Activated B cell treated with CpG ODN at 0.5 μM for 24 hours (primary cell): ENCODE measurements at regions of chr9 and their contacts with region 1.

Region 1: GRCh38 chr9:121156263-121156731 is 45.4 kb downstream of the RAB14 start:
- DNase-seq: no peak
- ATAC-seq: peak; percentile 87
- H3K4me3 Mint-ChIP-seq: peak overlapping the region; percentile 67
- H3K27ac Mint-ChIP-seq: peak overlapping the region; percentile 92
- H3K4me1 Mint-ChIP-seq: peaks cover 67% of the 10 kb centered on the region
- H3K27me3 Mint-ChIP-seq: no peaks in the 10 kb centered on the region
- CTCF ChIP-seq: no peak

Region 2: GRCh38 chr9:120842690-120843499 is 313.4 kb before region 1 on chr9 and contains the start of gene PSMD5:
- CTCF ChIA-PET with region 1: no interaction called
- POLR2A ChIA-PET with region 1: no interaction called
- intact Hi-C with region 1: loop called (anchors 1 kb)
- DNase-seq: peak; percentile 75
- ATAC-seq: peak; percentile 99
- H3K4me3 Mint-ChIP-seq: peak within 1 kb of the TSS; percentile 90
- H3K27ac Mint-ChIP-seq: peak within 1 kb of the TSS; percentile 91
- H3K4me1 Mint-ChIP-seq: peaks cover 42% of the 10 kb centered on the region
- H3K27me3 Mint-ChIP-seq: no peaks in the 10 kb centered on the region
- CTCF ChIP-seq: no peak
- total RNA-seq, gene PSMD5: 34.8 and 38.9 TPM in 2 replicates

Region 3: GRCh38 chr9:120892748-120893610 is 263.3 kb before region 1 on chr9:
- CTCF ChIA-PET with region 1: no interaction called
- POLR2A ChIA-PET with region 1: no interaction called
- intact Hi-C with region 1: no loop called
- DNase-seq: no peak
- ATAC-seq: peak; percentile 82
- H3K4me3 Mint-ChIP-seq: peak overlapping the region; percentile 61
- H3K27ac Mint-ChIP-seq: peak overlapping the region; percentile 90
- H3K4me1 Mint-ChIP-seq: peaks cover 60% of the 10 kb centered on the region
- H3K27me3 Mint-ChIP-seq: no peaks in the 10 kb centered on the region
- CTCF ChIP-seq: no peak

Region 4: GRCh38 chr9:121141706-121142105 is 14.6 kb before region 1 on chr9:
- CTCF ChIA-PET with region 1: no interaction called
- POLR2A ChIA-PET with region 1: no interaction called
- intact Hi-C with region 1: loop called (anchors 2 kb)
- DNase-seq: no peak
- ATAC-seq: no peak
- H3K4me3 Mint-ChIP-seq: no peak overlapping the region
- H3K27ac Mint-ChIP-seq: no peak overlapping the region
- H3K4me1 Mint-ChIP-seq: peaks cover 3% of the 10 kb centered on the region
- H3K27me3 Mint-ChIP-seq: no peaks in the 10 kb centered on the region
- CTCF ChIP-seq: no peak

Region 5: DNA sequence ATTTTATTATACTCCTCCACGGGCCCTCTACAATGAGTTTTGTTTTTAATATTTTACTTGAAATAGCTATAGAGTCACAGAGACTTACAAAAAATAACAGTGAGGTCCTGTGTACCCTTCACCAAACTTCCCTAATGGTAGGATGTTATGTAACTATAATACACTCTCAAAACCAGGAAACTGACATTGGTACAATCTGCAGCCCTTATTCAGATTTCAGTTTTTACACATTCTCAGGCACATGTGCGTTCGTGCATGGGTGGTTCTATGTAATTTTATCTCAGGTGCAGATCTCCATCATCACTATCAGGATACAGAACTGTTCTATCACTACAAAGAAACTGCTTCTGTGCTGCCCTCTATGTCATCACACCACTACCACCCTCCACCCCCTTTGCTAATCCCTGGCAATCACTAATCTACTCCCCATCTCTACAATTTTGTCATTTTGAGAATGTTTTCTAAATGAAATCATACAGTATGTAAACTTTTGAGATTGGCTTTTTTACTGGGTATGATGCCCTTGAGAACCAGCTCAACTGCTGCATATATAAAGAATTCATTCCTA is 29.0 kb after region 1 on chr9:
- CTCF ChIA-PET with region 1: no interaction called
- POLR2A ChIA-PET with region 1: no interaction called
- intact Hi-C with region 1: loop called (anchors 2 kb)
- DNase-seq: no peak
- ATAC-seq: peak; percentile 51
- H3K4me3 Mint-ChIP-seq: no peak overlapping the region
- H3K27ac Mint-ChIP-seq: peak overlapping the region; percentile 62
- H3K4me1 Mint-ChIP-seq: peaks cover 66% of the 10 kb centered on the region
- H3K27me3 Mint-ChIP-seq: no peaks in the 10 kb centered on the region
- CTCF ChIP-seq: no peak

Region 6: GRCh38 chr9:121545875-121546423 is 389.7 kb after region 1 on chr9:
- CTCF ChIA-PET with region 1: no interaction called
- POLR2A ChIA-PET with region 1: no interaction called
- intact Hi-C with region 1: no loop called
- DNase-seq: peak; percentile 68
- ATAC-seq: peak; percentile 86
- H3K4me3 Mint-ChIP-seq: no peak overlapping the region
- H3K27ac Mint-ChIP-seq: no peak overlapping the region
- H3K4me1 Mint-ChIP-seq: no peaks in the 10 kb centered on the region
- H3K27me3 Mint-ChIP-seq: peaks cover 24% of the 10 kb centered on the region
- CTCF ChIP-seq: no peak